ENCODE measurements at regions of chr5 and their contacts with region 1.

Region 1: GRCh38 chr5:132180134-132180745 is 47.4 kb downstream of the P4HA2 start:
- DNase-seq: no peak
- ATAC-seq: peak; percentile 35
- H3K4me3 Mint-ChIP-seq: peak overlapping the region; percentile 53
- H3K27ac Mint-ChIP-seq: no peak overlapping the region
- H3K4me1 Mint-ChIP-seq: peaks cover 23% of the 10 kb centered on the region
- H3K27me3 Mint-ChIP-seq: no peaks in the 10 kb centered on the region
- CTCF ChIP-seq: peak; percentile 54; the same call in 1 of the 2 replicates

Region 2: DNA sequence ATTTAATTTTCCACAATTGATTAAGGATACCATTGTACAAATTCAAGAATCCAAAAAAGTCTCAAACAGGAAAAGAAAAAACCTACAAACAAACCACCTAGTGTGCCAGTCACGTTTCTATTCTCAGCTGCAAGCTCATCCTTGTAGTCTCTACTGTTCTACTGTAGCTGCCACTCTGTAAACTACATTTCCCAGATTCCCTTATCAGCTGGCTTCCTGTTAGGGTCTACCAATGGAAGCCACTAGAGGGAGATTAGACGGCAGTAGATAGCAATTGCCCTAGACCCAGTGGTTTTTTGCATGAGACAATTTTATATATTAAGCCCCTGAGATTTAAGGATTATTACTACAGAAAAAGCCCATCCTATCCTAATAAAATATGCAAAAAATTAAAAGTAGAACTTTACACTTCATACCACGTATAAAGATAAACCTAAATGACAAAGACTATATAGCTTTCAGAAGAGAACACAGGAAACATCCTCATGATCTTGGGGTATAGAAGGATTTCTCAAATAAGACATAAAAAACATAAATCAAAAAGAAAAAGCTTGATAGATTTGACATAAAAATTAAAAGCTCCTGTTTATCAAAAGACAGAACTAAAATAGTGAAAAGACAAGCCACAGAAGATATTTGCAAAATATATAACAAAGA is 10.0 kb after region 1 on chr5:
- CTCF ChIA-PET with region 1: interaction called, 20 read pairs
- POLR2A ChIA-PET with region 1: no interaction called
- DNase-seq: no peak
- ATAC-seq: peak; percentile 100
- H3K4me3 Mint-ChIP-seq: no peak overlapping the region
- H3K27ac Mint-ChIP-seq: no peak overlapping the region
- H3K4me1 Mint-ChIP-seq: no peaks in the 10 kb centered on the region
- H3K27me3 Mint-ChIP-seq: no peaks in the 10 kb centered on the region; the same call in 1 of the 2 replicates
- CTCF ChIP-seq: peak; percentile 37

Region 3: GRCh38 chr5:132221781-132222648 is 41.8 kb after region 1 on chr5:
- CTCF ChIA-PET with region 1: no interaction called
- POLR2A ChIA-PET with region 1: no interaction called
- DNase-seq: no peak
- ATAC-seq: no peak
- H3K4me3 Mint-ChIP-seq: no peak overlapping the region
- H3K27ac Mint-ChIP-seq: no peak overlapping the region
- H3K4me1 Mint-ChIP-seq: peaks cover 14% of the 10 kb centered on the region
- H3K27me3 Mint-ChIP-seq: peaks cover 17% of the 10 kb centered on the region
- CTCF ChIP-seq: no peak

Measured in WTC11 (cell line).